ENCODE measurements at regions of chr9 and their contacts with region 1.

Region 1: GRCh38 chr9:11794984-11795383 is 898.2 kb upstream of the TYRP1 start:
- DNase-seq: no peak
- ATAC-seq: no peak
- H3K4me3 ChIP-seq: no peak overlapping the region
- H3K27ac ChIP-seq: no peak overlapping the region
- H3K4me1 ChIP-seq: no peaks in the 10 kb centered on the region
- H3K27me3 ChIP-seq: no peaks in the 10 kb centered on the region
- CTCF ChIP-seq: no peak
- POLR2A ChIP-seq: no peak

Region 2: DNA sequence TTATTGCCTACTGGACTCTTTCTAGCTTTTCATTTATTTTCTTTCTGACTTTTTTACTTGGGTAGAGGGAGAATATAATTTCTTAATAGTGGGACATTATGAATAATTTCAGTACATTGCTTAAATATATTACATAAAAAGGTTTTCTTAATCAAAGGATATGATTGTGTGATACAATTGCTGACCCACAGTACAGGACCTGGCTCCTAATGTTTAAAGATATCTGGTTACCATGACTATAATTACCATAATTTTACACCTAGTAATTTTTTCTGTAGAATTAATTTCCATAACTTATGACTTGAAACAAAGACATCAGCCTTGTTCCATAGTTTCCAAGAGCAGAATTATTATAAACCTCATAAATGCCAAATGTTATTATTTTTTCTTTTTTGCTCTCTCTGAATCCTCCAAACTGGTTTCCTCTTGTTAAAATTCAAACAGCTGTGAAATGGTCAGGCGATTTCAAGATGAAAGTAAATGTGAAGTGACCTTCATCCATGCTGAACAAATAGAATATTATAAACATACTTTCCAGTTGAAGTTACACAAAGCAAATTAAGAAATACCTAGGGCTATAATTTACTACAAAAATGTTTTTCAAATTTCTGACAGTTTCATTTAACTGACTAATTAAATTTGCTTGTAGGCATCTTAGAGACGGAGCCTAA is 597.0 kb after region 1 on chr9:
- intact Hi-C with region 1: loop called in 1 of 2 experiments (anchors 10 kb)
- DNase-seq: no peak
- ATAC-seq: no peak
- H3K4me3 ChIP-seq: no peak overlapping the region
- H3K27ac ChIP-seq: no peak overlapping the region
- H3K4me1 ChIP-seq: no peaks in the 10 kb centered on the region
- H3K27me3 ChIP-seq: no peaks in the 10 kb centered on the region
- CTCF ChIP-seq: no peak
- POLR2A ChIP-seq: no peak